ENCODE measurements at regions of chr3 and their contacts with region 1.

Region 1: GRCh38 chr3:27880969-27881892 is 159.1 kb upstream of the EOMES start:
- DNase-seq: peak; percentile 6 to 76 (median 50)
- ATAC-seq: peak; percentile 78
- H3K4me3 Mint-ChIP-seq: peak overlapping the region; percentile 79 to 94 (median 90)
- H3K27ac Mint-ChIP-seq: peak overlapping the region; percentile 93 to 100 (median 96)
- H3K4me1 Mint-ChIP-seq: peaks cover 43 to 79% (median 73%) of the 10 kb centered on the region in 4 donors
- H3K27me3 Mint-ChIP-seq: no peaks in the 10 kb centered on the region

Region 2: DNA sequence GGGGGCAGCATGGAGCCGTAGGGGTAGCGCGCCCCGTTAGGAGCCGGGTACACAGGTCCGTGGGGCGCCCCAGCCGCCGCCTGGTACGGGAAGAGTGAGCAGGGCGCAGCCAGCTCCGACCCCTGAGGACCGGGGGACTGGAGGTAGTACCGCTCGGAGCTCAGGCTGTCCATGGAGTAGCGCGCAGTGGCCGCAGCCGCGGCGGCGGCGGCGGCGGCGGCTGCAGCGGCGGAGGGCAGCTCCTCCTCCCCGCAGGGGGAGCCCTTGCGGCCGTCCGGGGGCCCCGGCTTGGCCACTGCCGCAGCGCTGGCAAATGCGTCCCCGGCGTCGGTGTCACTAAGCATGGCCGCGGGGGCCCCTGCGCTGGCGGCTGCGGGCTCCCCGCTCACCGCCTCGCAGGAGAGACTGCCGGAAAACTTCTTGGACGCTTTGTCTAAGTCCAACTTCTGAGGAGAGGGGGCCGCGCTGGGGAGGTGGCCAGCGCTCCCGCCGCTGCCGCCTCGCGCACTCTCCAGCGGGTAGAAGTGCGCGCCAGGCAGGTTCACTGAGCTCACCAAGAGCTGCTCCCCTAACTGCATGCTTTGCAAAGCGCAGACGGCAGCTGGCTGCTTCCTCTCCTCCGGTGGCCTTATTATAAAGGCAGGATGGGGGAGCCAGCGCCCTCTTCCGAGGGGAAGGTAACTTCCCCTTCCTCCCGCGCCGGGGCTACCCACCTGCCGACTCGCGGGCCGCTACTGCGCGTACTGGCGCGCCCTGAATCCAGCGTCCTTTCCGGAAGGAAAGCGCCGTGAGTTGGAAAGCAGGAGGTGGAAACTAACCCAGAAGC is 159.3 kb before region 1 on chr3 and contains the start of gene EOMES:
- POLR2A ChIA-PET with region 1: interaction called, 14 read pairs
- DNase-seq: peak; percentile 63 to 90 (median 76)
- ATAC-seq: peak; percentile 77 to 81
- H3K4me3 Mint-ChIP-seq: peak within 1 kb of the TSS; percentile 85 to 98 (median 90)
- H3K27ac Mint-ChIP-seq: peak within 1 kb of the TSS in 7 of 10 donors; percentile 44 to 88 (median 71)
- H3K4me1 Mint-ChIP-seq: peaks cover 10 to 45% (median 37%) of the 10 kb centered on the region in 4 donors
- H3K27me3 Mint-ChIP-seq: peaks cover 25 to 50% (median 44%) of the 10 kb centered on the region in 5 donors
- polyA plus RNA-seq, gene EOMES: 6.2 to 103 (median 8.4) TPM

Region 3: DNA sequence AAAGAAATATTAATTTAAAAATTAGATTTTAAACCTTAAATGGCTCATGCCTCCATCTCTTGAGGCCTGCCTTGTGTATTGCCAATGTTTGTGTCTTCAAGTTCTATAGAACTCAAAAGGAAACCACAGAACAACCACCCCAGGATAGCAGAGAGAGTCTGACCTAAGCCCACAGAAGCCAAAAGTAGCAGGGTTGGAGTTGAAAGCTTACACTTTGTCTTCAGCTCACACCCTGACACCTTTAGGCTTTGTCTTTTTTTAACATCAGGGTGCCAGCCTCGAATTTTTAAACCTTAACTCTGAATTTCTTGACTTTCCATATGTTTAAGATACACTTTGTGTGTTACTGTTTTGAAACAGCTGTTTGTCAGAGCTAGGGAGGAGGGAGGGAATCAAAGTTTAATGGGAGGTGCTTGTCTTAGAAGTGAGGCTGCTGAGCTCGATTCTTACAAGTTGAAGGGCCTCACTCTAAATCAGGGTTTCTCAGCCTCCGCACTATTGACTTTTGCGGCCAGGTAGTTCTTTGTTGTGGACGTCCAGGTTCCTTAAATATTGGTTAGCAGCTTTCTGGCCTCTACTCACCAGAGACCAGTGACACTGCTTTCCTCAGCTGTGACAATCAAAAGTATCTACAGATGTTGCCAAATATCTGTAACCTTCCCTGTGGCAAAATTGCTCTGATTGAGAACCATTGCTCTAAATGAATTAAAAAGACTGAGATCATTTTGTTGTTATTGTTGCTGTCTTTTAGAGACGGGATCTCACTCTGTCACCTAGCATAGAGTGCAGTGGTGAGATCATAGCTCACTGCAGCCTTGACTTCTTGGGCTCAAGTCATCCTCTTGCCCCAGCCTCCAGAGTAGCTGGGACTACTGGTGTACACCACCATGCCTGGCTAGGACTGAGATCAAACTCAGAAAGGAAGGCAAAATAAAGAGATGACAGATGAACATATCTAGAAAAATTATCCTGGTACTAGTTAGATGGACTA is 19.9 kb before region 1 on chr3:
- POLR2A ChIA-PET with region 1: interaction called, 32 read pairs
- DNase-seq: peak in 4 of 10 donors; percentile 31 to 60 (median 53)
- ATAC-seq: peak; percentile 93 to 94
- H3K4me3 Mint-ChIP-seq: peak overlapping the region in 9 of 10 donors; percentile 9 to 70 (median 25)
- H3K27ac Mint-ChIP-seq: peak overlapping the region; percentile 70 to 93 (median 90)
- H3K4me1 Mint-ChIP-seq: peaks cover 25 to 55% (median 50%) of the 10 kb centered on the region in 4 donors
- H3K27me3 Mint-ChIP-seq: no peaks in the 10 kb centered on the region